Psoas muscle (tissue), 8 donors: ENCODE measurements at regions of chr6 and their contacts with region 1.

Region 1: DNA sequence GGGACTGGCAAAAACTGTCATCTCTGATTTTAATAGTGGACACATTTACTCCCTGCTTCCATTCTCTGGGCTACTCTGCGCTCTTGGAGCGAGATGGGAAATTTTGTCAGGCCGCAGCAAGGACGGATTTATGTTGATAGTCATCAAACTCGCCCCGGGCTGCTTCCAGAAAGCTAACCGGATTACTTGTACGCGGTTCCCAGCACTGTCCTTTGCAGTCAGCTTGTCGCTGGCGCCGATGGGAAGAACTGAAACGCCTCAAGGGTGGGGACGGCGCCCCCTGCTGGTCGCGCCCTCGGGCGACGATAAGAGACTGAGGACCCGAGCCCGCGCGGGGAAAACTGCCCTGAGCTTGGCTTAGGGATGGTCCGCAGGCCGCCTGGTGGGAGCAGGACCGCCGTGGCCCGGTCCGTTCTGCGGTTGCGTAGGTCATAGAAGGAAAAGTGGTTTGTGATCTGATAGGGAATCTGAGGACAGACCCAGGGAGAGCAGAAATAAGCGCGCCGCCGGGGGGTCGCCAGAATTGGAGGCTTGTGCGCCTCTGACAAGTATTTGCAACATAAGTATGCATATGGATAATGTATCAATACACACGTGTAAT is 984 bp upstream of the ABT1 start:
- DNase-seq: peak; percentile 94 to 96
- ATAC-seq: peak; percentile 84 to 89 (median 86)
- H3K4me3 ChIP-seq: peak overlapping the region; percentile 95
- H3K27ac ChIP-seq: peak overlapping the region; percentile 97
- H3K4me1 ChIP-seq: peaks cover 13% of the 10 kb centered on the region
- H3K27me3 ChIP-seq: peaks cover 0 to 30% (median 0%) of the 10 kb centered on the region in 3 donors
- CTCF ChIP-seq: peak; percentile 99

Region 2: GRCh38 chr6:26175428-26176181 is 420.2 kb before region 1 on chr6:
- intact Hi-C with region 1: loop called in 1 of 2 experiments (anchors 2 kb)
- DNase-seq: no peak
- ATAC-seq: peak in 1 of 4 donors; percentile 28
- H3K4me3 ChIP-seq: no peak overlapping the region
- H3K27ac ChIP-seq: no peak overlapping the region
- H3K4me1 ChIP-seq: no peaks in the 10 kb centered on the region
- H3K27me3 ChIP-seq: no peaks in the 10 kb centered on the region
- CTCF ChIP-seq: peak; percentile 59

Region 3: DNA sequence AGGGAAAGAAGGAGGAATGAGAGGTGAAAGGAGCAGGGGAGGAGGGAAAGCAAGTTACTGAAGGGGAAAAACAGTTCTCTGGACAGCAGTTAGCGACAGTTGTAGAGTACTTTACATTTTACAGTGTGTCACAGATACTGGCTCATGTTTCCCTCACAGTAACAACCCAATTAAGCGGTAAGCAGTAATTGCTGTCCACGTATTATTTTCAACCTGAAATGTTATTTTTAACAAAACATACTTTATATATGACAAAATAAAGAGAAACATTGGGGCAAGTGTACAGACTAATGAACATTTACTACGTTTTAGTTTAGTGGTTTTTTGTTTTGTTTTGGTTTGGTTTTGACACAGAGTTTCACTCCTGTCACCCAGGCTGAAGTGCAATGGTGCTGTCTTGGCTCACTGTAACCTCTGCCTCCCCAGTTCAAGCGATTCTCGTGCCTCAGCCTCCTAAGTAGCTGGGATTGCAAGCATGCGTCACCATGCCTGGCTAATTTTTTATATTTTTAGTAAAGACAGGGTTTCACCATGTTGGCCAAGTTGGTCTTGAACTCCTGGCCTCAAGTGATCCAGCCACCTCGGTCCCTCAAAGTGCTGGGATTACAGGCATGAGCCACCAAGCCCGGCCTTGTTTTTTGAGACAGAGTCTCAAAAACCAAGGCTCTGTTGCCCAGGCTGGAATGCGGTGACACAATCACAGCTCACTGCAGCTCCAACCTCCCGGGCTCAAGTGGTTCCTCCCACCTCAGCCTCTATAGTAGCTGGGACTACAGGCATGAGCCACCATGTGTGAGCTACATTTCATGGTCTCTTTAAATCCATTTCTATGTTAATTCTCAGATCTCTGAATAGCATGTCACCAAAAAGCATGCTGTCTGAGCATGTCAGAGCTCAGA is 253.4 kb before region 1 on chr6:
- intact Hi-C with region 1: loop called (anchors 1 to 2 kb)
- DNase-seq: no peak
- ATAC-seq: peak in 1 of 4 donors; percentile 16
- H3K4me3 ChIP-seq: no peak overlapping the region
- H3K27ac ChIP-seq: no peak overlapping the region
- H3K4me1 ChIP-seq: no peaks in the 10 kb centered on the region
- H3K27me3 ChIP-seq: peaks cover 0 to 9% (median 0%) of the 10 kb centered on the region in 3 donors
- CTCF ChIP-seq: no peak

Region 4: DNA sequence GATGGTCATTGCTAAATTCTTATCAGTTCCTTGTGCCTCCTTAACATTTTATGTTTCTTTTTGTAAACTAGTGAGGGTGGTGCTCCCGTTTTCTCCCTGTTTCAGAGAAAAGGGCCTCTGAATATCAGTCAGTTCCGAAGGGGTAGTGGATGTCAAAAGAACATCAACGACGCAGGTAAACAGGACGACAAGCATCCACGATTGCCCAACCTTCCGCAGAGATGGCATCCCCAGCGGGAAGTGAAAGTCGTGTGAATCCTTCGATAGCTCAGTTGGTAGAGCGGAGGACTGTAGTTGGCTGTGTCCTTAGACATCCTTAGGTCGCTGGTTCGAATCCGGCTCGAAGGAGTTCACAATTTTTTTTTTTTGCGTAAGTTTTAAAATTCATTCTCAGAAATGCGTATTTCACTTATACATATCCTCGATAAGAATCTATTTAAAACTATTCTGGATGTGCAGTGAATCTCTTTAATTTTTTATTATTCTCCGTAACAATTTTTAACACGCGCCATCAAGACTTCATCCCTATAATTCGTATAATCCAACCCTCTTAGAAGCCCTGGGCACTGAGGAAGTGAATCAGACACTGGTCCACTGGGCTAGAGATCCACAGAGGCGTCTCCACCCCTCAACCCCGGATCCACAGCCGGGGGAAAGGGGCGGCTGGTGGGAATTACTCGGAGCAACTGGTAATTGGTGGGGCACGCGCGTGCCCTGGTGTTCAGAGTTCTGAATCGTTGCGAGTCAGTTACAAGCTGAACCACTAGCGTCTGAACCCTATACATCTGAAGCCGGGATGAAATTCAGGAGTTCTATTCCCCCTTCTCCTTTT is 27.0 kb before region 1 on chr6:
- intact Hi-C with region 1: loop called in 1 of 2 experiments (anchors 1 kb)
- DNase-seq: peak; percentile 87 to 93
- ATAC-seq: peak; percentile 79 to 91 (median 83)
- H3K4me3 ChIP-seq: peak overlapping the region; percentile 70
- H3K27ac ChIP-seq: peak overlapping the region; percentile 43
- H3K4me1 ChIP-seq: peaks cover 7% of the 10 kb centered on the region
- H3K27me3 ChIP-seq: no peaks in the 10 kb centered on the region
- CTCF ChIP-seq: no peak